Lower leg skin (tissue), 4 donors: ENCODE measurements at regions of chr9 and their contacts with region 1.

Region 1: DNA sequence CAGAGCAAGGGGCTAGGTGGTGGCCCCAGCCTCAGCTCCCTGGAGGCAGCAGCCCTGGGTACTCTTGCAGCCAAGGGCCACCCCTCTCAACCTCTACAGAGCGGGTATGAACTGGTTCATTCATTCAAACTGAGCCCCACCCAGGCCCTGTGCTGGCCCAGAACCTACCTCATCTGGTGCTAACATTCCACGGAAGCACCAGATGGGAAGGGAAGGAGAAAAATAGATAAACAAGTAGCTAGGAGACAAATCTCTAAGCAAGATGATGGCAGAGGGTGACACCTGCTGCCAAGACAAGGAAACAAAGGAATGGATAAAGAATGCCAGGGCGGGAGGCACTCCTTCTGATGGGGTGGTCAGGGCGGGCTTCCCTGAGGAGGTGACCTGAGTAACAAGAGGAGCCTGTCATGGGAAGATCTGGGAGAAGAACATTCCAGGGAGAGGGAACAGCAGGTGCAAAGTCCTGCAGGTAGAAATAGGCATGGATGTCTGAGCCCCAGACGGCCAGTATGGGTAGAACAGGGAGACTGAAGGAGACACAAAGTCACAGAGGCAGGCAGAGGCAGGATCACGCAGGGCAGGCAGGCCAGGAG is 6.1 kb downstream of the ST6GALNAC4 start:
- DNase-seq: no peak
- H3K4me3 ChIP-seq: no peak overlapping the region
- CTCF ChIP-seq: no peak
- POLR2A ChIP-seq: no peak

Region 2: GRCh38 chr9:127785023-127785932 is 125.4 kb before region 1 on chr9:
- intact Hi-C with region 1: loop called (anchors 5 kb)
- DNase-seq: peak; percentile 86 to 98
- H3K4me3 ChIP-seq: peak overlapping the region; percentile 78
- CTCF ChIP-seq: peak in 1 of 3 donors; percentile 70
- POLR2A ChIP-seq: no peak

Region 3: DNA sequence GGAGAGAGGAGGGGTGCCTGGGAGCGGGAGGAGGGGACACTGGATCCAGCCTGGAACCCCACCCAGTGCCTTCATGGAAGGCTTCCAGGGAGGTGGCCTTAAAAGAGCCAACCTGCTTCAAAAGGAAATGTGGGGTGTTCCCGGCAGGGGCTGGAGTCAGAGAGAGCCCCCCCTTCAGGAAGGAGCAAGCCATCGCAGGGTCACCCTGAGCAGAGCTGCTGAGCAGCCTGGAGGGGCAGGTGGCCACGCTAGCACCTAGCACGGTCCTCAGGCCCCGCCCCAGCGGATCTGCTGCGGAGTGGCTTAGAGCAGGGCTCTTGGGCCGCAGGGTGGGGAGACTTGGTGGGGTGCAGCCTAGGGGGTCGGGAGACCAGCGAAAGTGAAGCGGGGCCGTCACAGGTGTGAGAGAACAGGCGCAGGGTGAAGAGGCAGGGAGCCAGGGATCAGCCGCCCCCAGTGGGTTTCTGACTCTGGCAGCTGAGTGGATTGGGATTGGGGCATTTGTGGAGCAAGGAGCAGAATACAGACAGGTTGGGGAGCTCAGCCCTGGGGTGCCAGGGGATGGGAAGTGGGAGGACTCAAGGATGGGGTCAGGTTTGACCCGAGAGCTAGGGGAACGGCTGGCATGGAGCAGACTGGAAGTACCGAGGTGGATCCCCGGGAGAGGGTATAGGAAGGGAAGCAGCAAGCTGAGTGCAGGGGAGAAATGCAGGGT is 240.0 kb after region 1 on chr9:
- intact Hi-C with region 1: no loop called
- DNase-seq: no peak
- H3K4me3 ChIP-seq: no peak overlapping the region
- CTCF ChIP-seq: no peak
- POLR2A ChIP-seq: no peak